Activated T-helper 1 cell treated with anti-CD3 and anti-CD28 coated beads, Interleukin-12 subunit alpha, Interleukin-12 subunit beta, Interleukin-2, Interleukin-4 antibody, amounts not matched to agents 30 ng/mL and 10 ng/mL and 1 ng/mL, durations not matched to agents 14 hours and 24 hours and 36 hours (primary cell): ENCODE measurements at regions of chr16 and their contacts with region 1.

Region 1: DNA sequence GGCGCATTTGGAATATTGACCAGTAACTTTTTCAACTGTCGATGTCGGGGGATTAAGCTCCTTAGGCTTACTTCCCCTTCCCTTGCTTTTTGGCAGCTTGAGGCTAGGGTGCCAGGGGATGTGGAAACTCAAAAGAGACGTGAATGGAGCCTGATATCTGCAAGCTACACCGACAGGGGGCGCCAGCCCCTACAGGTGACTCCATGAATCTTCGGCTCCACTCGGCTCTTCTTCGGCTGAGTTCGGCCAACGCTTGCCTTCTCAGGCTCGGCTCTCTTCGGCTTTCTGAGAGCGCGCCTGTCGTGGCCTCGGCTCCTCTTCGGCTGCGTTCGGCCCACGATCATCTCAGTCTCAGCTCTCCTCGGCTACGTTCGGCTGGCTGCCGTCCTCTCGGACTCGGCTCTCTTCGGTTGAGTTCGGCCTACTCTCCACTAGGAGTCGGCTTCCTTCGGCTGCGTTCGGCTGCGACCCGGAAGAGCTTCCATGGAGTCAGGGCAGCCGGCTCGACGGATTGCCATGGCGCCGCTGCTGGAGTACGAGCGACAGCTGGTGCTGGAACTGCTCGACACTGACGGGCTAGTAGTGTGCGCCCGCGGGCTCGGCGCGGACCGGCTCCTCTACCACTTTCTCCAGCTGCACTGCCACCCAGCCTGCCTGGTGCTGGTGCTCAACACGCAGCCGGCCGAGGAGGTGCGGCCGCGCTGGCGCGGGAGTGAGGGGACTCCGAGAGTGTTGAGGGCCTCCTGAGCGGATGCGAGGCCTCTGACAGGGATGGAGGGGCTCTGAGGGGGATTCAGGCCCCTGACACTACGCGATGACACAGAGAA is at the start of gene ERCC4:
- DNase-seq: peak; percentile 98
- H3K4me3 Mint-ChIP-seq: peak within 1 kb of the TSS; percentile 96
- H3K27ac Mint-ChIP-seq: peak within 1 kb of the TSS; percentile 85
- H3K4me1 Mint-ChIP-seq: peaks cover 29% of the 10 kb centered on the region
- H3K27me3 Mint-ChIP-seq: peaks cover 2% of the 10 kb centered on the region
- total RNA-seq, gene ERCC4: 15.9 and 18.6 TPM in 2 replicates

Region 2: DNA sequence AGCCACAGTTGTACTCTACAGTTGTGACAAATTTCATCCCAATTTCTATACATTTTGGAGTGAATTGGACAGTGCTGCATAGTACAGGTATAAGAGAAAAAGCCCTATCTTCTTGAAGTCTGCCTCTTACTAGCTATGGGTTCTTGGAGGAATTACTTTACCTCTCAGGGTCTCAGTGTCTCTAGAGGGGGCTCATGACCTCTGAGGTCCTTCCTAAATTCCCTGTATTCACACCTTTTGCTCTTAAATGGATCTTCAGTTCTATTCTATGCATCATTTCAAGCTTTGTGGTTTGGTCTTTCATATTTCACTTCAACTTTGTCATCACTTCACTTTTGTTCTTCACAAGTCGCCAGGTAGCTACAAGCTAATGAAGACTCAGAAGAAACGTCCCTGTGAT is 71.1 kb before region 1 on chr16:
- intact Hi-C with region 1: no loop called
- DNase-seq: no peak
- H3K4me3 Mint-ChIP-seq: no peak overlapping the region
- H3K27ac Mint-ChIP-seq: no peak overlapping the region
- H3K4me1 Mint-ChIP-seq: no peaks in the 10 kb centered on the region
- H3K27me3 Mint-ChIP-seq: no peaks in the 10 kb centered on the region

Region 3: GRCh38 chr16:14070877-14071575 is 151.1 kb after region 1 on chr16 and contains the start of gene MRTFB:
- intact Hi-C with region 1: loop called (anchors 1 kb)
- DNase-seq: peak; percentile 77
- H3K4me3 Mint-ChIP-seq: peak within 1 kb of the TSS; percentile 86
- H3K27ac Mint-ChIP-seq: peak within 1 kb of the TSS; percentile 74
- H3K4me1 Mint-ChIP-seq: peaks cover 16% of the 10 kb centered on the region
- H3K27me3 Mint-ChIP-seq: no peaks in the 10 kb centered on the region
- total RNA-seq, gene MRTFB: 10.4 and 13.5 TPM in 2 replicates

Region 4: DNA sequence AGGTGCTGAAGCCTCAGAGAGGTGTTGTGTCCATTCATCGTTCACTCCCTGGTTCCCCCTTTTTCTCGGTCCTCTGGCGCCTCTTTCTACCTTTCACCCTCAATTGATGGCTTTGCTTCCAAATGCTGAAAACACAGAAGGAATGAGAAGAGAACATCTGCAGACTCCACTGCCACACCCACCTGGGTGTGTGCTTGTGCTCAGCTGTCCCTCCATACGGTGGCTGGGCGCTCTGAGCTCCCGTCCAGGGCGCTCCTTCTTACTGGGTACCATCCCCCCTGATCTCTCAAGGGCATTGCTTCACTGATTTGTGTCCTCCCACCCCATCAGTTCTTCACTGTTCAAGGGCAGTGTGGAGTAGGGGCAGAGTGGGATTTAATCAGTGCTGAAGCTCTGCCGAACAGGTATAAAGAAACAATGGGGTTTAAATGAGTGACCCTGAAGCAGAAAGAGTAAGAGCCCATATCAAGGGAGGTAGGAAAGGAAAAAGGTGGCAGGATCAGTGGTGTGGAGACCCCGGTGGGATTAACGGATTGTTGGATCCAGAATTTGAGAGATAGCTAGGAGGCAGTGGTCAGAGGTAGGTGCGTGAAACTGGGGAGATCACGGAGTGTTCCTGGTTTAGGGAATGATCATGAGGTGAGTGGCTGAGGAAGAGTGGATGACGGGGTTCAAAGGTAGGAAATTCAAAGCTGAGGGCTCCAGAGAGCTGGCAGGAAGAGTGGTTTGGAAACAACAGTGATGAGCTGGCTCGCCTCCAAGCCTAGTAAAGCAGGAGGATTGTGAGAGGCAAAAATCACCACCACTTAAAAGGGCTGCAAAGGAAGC is 192.0 kb after region 1 on chr16:
- intact Hi-C with region 1: no loop called
- DNase-seq: no peak
- H3K4me3 Mint-ChIP-seq: no peak overlapping the region
- H3K27ac Mint-ChIP-seq: no peak overlapping the region
- H3K4me1 Mint-ChIP-seq: no peaks in the 10 kb centered on the region
- H3K27me3 Mint-ChIP-seq: no peaks in the 10 kb centered on the region

Region 5: GRCh38 chr16:14249291-14250032 is 329.6 kb after region 1 on chr16:
- intact Hi-C with region 1: loop called (anchors 1 kb)
- DNase-seq: peak; percentile 19
- H3K4me3 Mint-ChIP-seq: no peak overlapping the region
- H3K27ac Mint-ChIP-seq: no peak overlapping the region
- H3K4me1 Mint-ChIP-seq: no peaks in the 10 kb centered on the region
- H3K27me3 Mint-ChIP-seq: no peaks in the 10 kb centered on the region

Region 6: DNA sequence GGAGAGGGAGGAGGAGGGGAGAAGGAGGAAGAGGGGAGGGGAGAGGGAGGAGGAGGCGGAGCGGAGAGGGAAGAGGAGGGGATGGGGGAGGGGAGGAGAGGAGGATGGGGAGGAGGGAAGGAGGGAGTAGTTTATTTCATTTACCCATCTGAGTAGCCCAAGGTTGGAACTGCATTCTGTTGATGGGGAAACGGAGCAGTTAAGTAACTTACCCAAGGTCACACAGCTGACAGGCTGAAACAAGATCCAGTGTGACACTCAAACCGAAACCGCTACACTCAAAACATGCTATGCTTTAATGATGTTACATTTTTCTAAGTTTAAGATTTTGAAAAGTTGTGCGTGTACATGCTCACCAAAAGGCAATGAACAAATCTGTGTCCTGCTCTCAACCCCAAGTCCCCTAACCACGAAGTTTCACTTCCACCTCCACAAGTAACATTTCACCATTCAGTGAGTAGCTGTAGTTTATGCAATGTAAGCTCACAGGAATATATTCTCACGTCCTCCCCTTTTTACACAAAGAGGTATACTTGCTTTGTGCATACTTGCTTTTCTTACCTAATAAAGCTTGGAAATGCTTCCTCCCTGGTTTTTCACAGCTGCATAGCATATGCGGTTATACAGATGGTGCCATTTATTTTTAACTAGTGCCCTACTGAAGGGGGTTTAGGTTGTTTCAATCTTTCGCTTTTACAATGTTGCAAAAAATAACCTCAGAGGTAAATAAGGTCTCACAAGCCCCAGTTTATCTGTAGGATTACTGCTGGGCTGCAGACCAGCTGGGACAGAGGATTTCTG is 434.9 kb after region 1 on chr16:
- intact Hi-C with region 1: loop called (anchors 2 kb)
- DNase-seq: peak; percentile 24
- H3K4me3 Mint-ChIP-seq: peak overlapping the region; percentile 8
- H3K27ac Mint-ChIP-seq: no peak overlapping the region
- H3K4me1 Mint-ChIP-seq: peaks cover 10% of the 10 kb centered on the region
- H3K27me3 Mint-ChIP-seq: peaks cover 21% of the 10 kb centered on the region

Region 7: GRCh38 chr16:14632692-14633569 is 713.0 kb after region 1 on chr16 and contains the start of gene BFAR:
- intact Hi-C with region 1: loop called (anchors 2 kb)
- DNase-seq: peak; percentile 99
- H3K4me3 Mint-ChIP-seq: peak within 1 kb of the TSS; percentile 100
- H3K27ac Mint-ChIP-seq: peak within 1 kb of the TSS; percentile 100
- H3K4me1 Mint-ChIP-seq: peaks cover 60% of the 10 kb centered on the region
- H3K27me3 Mint-ChIP-seq: no peaks in the 10 kb centered on the region
- total RNA-seq, gene BFAR: 59.8 and 64.8 TPM in 2 replicates